ENCODE measurements at regions of chr2 and their contacts with region 1.

Region 1: DNA sequence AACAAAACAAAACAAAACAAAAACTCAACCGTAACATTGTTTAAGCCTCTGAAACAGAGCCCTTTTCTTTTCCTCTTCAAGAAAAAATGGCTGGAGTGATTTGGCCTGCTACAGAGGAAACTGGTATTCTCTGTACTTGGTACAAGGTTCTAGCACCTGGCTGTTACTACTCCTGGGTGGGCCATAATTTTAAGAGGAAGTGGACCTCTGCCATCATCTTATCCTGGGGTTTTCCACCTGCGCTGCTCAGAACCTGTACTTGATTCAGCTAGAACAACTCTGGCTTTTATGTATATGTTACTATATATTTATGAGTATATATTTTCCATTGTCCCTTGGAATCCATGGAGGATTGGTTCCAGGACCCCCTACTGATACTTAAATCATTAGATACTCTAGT is 22.5 kb downstream of the SRSF7 start:
- DNase-seq: no peak
- ATAC-seq: no peak
- H3K4me3 ChIP-seq: no peak overlapping the region
- H3K27ac ChIP-seq: no peak overlapping the region
- H3K4me1 ChIP-seq: no peaks in the 10 kb centered on the region
- H3K27me3 ChIP-seq: no peaks in the 10 kb centered on the region
- CTCF ChIP-seq: no peak

Region 2: DNA sequence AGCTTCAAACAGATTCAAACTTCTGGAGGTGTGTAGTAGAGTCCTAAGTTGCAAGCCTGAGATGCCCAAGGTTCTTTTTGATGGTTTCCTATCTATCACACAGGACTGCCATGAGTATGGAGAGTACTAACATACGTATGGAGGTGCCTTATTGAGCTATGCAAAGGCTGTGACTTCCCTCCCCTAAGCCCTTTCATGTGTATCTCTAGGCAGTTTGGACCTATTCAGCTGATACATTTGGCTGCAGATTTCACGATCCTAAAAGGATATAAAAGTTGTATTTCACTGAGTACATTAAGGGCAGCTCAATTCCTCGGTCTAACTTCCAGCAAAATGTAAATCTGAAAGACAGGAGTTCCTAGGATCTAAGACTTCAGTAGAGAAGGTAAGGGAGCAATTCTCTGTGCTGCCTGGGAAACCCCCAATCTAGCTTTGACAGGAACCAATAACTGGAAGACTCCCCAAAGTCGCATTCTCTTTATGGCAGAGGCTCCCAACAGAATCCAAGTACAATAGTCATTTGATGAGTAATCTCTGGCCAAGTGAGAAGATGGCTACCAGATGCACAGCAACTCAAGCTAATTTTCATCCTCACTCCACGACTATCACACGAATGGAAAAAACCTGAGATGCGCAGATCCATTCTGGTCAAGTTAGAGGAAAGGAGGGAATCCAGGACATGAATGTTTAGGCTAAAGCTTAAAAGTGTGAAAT is 435.4 kb before region 1 on chr2:
- intact Hi-C with region 1: no loop called
- DNase-seq: no peak
- ATAC-seq: no peak
- H3K4me3 ChIP-seq: no peak overlapping the region
- H3K27ac ChIP-seq: no peak overlapping the region
- H3K4me1 ChIP-seq: no peaks in the 10 kb centered on the region
- H3K27me3 ChIP-seq: no peaks in the 10 kb centered on the region
- CTCF ChIP-seq: no peak

Region 3: GRCh38 chr2:38535744-38536506 is 192.8 kb before region 1 on chr2:
- intact Hi-C with region 1: loop called in 1 of 3 experiments (anchors 5 kb)
- DNase-seq: peak; percentile 62 to 97 (median 80)
- ATAC-seq: peak; percentile 96 to 99 (median 98)
- H3K4me3 ChIP-seq: peak overlapping the region; percentile 2 to 48 (median 31)
- H3K27ac ChIP-seq: no peak overlapping the region
- H3K4me1 ChIP-seq: no peaks in the 10 kb centered on the region
- H3K27me3 ChIP-seq: no peaks in the 10 kb centered on the region
- CTCF ChIP-seq: peak; percentile 88 to 96 (median 92)

Region 4: DNA sequence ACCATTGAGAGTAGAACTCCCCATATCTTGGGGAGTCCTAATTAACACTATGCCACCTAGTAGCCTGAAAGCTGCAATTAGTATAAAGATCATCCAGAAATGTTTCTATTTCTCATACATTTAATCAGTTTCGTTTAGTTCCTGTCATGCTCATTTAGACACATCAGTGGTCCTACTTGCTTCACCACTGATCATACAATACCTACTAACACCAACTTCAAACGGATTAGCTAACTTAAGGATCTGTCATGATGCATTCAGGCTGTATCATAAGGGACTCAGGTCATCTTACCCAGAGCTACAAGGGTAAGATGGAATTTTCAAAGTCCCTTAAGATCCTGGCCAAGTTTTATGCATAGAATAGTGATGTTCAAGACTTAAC is 15.7 kb after region 1 on chr2:
- intact Hi-C with region 1: loop called in 1 of 3 experiments (anchors 2 kb)
- DNase-seq: no peak
- ATAC-seq: no peak
- H3K4me3 ChIP-seq: no peak overlapping the region
- H3K27ac ChIP-seq: no peak overlapping the region
- H3K4me1 ChIP-seq: peaks cover 4 to 33% (median 28%) of the 10 kb centered on the region in 3 donors
- H3K27me3 ChIP-seq: no peaks in the 10 kb centered on the region
- CTCF ChIP-seq: no peak